ENCODE measurements at regions of chr17 and their contacts with region 1.

Region 1: DNA sequence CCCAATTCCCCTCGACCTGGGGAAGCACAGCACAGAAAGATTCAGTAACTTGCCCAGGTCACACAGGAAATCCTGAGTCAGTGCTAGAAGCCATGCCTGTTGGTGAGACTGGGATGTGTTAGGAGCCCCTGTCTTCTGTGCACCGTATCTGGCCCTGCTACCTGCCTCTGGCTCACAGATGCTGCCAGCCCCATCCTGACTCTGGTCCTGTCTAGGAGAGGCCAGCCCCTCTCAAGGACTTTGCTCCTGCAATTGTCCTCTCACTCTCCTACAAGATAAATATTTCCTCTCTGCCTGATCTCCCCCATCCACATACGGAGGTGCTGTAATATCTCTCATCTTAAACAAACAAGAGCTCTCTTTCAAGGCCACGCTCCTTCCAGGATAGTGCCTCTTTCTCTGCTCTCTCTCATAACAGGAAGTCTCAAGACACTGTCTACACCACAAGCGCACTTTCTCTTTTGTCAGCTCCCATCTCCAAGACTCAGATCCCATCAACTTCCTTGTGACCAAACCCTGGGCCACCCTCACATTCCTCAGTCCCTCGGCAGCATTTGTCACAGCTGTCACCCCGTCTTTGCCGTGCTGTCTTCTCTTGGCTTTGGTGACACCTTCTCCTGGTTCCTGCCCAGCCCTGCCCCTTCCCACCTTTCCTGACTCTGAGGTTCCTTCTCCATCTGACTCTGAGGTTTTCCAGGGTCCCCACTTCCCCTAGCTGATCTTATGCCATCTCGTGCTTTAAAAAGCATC is 1.9 kb downstream of the SLC13A2 start:
- DNase-seq: peak; percentile 84 to 87
- H3K4me3 ChIP-seq: no peak overlapping the region
- H3K4me3 Mint-ChIP-seq: peak overlapping the region; percentile 47
- H3K27ac Mint-ChIP-seq: peak overlapping the region; percentile 60
- H3K4me1 ChIP-seq: peaks cover 76% of the 10 kb centered on the region
- H3K4me1 Mint-ChIP-seq: peaks cover 57% of the 10 kb centered on the region
- H3K27me3 ChIP-seq: no peaks in the 10 kb centered on the region
- H3K27me3 Mint-ChIP-seq: no peaks in the 10 kb centered on the region
- CTCF ChIP-seq: no peak

Region 2: GRCh38 chr17:28306954-28307401 is 168.3 kb before region 1 on chr17:
- CTCF ChIA-PET with region 1: no interaction called
- POLR2A ChIA-PET with region 1: no interaction called
- intact Hi-C with region 1: no loop called
- DNase-seq: no peak
- H3K4me3 ChIP-seq: no peak overlapping the region
- H3K4me3 Mint-ChIP-seq: no peak overlapping the region
- H3K27ac Mint-ChIP-seq: no peak overlapping the region
- H3K4me1 ChIP-seq: no peaks in the 10 kb centered on the region
- H3K4me1 Mint-ChIP-seq: peaks cover 7% of the 10 kb centered on the region
- H3K27me3 ChIP-seq: no peaks in the 10 kb centered on the region
- H3K27me3 Mint-ChIP-seq: no peaks in the 10 kb centered on the region
- CTCF ChIP-seq: no peak

Region 3: DNA sequence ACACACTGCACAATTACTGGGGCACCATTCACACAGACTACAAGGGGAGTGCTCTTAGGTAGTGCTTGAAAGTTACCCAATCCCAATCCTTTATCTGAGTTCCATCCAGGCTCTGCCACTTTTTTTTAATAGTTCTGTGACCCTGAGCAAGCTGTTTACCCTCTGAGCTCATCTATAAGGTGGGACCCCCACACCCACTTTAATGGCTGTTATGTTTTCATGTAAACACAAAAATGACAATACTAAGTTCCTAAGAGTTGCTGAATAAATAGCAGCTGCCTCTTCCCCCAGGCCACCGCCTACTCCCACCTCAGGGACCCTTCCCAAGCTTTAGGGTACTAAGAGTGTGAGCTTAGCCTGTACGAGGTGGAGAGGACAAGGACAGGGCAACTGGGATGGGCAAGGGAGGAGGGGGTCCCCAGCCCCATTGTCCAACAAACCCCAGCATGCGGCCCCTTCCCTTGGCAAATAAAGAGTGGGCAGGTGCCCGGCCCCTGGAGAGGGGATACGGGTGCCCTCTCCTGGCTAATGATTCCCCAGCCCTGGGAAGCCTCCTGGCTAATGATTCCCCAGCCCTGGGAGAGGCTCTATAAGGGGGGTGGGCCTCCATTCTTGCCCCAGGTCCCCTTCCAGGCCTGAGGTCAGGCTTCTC is 12.7 kb after region 1 on chr17:
- CTCF ChIA-PET with region 1: no interaction called
- POLR2A ChIA-PET with region 1: no interaction called
- intact Hi-C with region 1: loop called (anchors 2 kb)
- DNase-seq: peak in 1 of 2 experiments; percentile 57
- H3K4me3 ChIP-seq: no peak overlapping the region
- H3K4me3 Mint-ChIP-seq: no peak overlapping the region
- H3K27ac Mint-ChIP-seq: no peak overlapping the region
- H3K4me1 ChIP-seq: peaks cover 24% of the 10 kb centered on the region
- H3K4me1 Mint-ChIP-seq: peaks cover 11% of the 10 kb centered on the region
- H3K27me3 ChIP-seq: no peaks in the 10 kb centered on the region
- H3K27me3 Mint-ChIP-seq: no peaks in the 10 kb centered on the region
- CTCF ChIP-seq: peak in 1 of 2 experiments; percentile 55

Region 4: GRCh38 chr17:28524476-28525368 is 49.4 kb after region 1 on chr17:
- CTCF ChIA-PET with region 1: no interaction called
- POLR2A ChIA-PET with region 1: no interaction called
- intact Hi-C with region 1: loop called (anchors 1 kb)
- DNase-seq: peak; percentile 81 to 92
- H3K4me3 ChIP-seq: no peak overlapping the region
- H3K4me3 Mint-ChIP-seq: peak overlapping the region; percentile 39
- H3K27ac Mint-ChIP-seq: peak overlapping the region; percentile 97
- H3K4me1 ChIP-seq: peaks cover 37% of the 10 kb centered on the region
- H3K4me1 Mint-ChIP-seq: peaks cover 22% of the 10 kb centered on the region
- H3K27me3 ChIP-seq: no peaks in the 10 kb centered on the region
- H3K27me3 Mint-ChIP-seq: no peaks in the 10 kb centered on the region
- CTCF ChIP-seq: no peak